Left colon (tissue), 2 donors: ENCODE measurements at regions of chr16 and their contacts with region 1.

Region 1: DNA sequence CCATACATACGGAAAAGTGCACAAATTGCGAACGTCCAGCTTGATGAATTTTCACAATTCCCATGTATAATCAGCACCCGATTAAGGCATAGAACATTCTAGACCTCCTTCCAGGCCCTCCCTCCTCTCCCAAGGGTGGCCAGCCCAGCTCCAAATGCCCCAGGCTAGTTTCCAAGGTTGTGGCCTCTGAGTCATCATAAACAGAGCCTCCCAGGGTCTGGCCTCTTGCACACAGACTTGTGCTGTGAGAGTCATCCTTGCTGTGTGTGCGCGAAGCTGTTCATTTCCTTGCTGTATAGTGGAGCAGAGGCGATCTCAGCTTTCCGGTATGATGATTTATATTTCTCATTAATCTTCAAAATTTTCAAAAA is 20.5 kb upstream of the JPH3 start:
- DNase-seq: peak; percentile 32 to 63
- ATAC-seq: peak; percentile 34

Region 2: GRCh38 chr16:87765776-87766484 is 184.1 kb after region 1 on chr16 and contains the start of gene KLHDC4:
- intact Hi-C with region 1: loop called in 1 of 2 experiments (anchors 10 kb)
- DNase-seq: peak; percentile 88 to 94
- ATAC-seq: peak; percentile 92
- total RNA-seq, gene KLHDC4: 28.7 to 118 TPM